ENCODE measurements at regions of chr5 and their contacts with region 1.

Region 1: GRCh38 chr5:77770293-77771005 is 5.7 kb downstream of the TBCA start:
- DNase-seq: peak; percentile 39
- ATAC-seq: peak; percentile 62; the same call in 1 of the 2 replicates
- H3K4me3 ChIP-seq: no peak overlapping the region
- H3K27ac ChIP-seq: no peak overlapping the region
- H3K4me1 ChIP-seq: peaks cover 41% of the 10 kb centered on the region
- H3K27me3 ChIP-seq: no peaks in the 10 kb centered on the region
- CTCF ChIP-seq: no peak

Region 2: DNA sequence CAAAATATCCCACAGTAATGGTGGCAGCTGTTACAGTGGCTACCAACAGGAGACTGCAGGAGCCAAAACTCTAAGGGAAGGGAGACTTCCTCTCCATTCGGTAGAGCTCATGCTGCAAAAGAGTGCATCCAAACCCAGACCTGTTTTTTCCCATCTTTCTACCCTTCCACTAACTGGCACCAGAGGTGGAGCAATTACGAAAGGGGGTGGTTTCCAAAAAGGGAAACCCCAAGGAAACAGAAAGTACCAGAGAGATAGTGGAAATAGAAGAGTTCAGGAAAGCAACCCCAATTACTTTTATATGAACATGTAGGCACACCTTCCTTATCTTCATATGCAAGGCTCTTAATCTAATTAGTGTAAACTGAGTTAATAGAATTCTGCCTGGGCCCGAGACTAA is 271.0 kb before region 1 on chr5:
- CTCF ChIA-PET with region 1: no interaction called
- POLR2A ChIA-PET with region 1: interaction called, 11 read pairs
- intact Hi-C with region 1: no loop called
- DNase-seq: no peak
- ATAC-seq: no peak
- H3K4me3 ChIP-seq: no peak overlapping the region
- H3K27ac ChIP-seq: no peak overlapping the region
- H3K4me1 ChIP-seq: no peaks in the 10 kb centered on the region
- H3K27me3 ChIP-seq: no peaks in the 10 kb centered on the region
- CTCF ChIP-seq: no peak

Region 3: DNA sequence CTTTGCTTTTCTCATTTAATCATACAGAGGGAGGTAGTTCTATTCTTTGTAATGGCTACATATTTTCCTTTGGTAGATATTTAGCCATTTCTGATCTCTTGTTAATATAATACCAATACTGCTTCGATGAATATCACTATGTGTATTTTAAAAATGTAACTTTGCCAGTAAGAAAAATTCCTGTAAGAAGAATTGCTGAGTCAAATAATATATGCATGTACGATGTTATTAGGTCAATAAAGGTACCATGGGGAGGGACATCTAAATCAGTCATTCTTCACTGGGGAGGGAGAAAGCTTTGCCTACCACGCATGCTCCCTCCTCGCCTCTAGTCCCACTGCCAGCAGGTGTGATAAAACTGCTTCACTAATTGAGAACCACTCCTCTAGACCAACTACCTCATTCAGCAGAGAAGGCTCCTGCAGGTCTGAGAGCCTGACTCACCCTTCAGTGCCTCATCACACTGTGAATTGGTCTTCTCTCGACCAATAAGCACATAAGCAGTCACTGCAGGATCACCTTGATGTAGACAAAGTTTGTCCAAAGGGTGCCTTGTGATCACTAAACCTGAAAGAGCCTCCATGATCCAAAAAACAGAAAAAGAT is 61.8 kb after region 1 on chr5:
- CTCF ChIA-PET with region 1: interaction called, 10 read pairs
- POLR2A ChIA-PET with region 1: no interaction called
- intact Hi-C with region 1: no loop called
- DNase-seq: no peak
- ATAC-seq: no peak
- H3K4me3 ChIP-seq: no peak overlapping the region
- H3K27ac ChIP-seq: no peak overlapping the region
- H3K4me1 ChIP-seq: no peaks in the 10 kb centered on the region
- H3K27me3 ChIP-seq: no peaks in the 10 kb centered on the region
- CTCF ChIP-seq: no peak